H1 (cell line): ENCODE measurements at regions of chr11 and their contacts with region 1.

Region 1: GRCh38 chr11:113796663-113797259 is 17.2 kb downstream of the CLDN25 start:
- DNase-seq: no peak
- H3K4me3 ChIP-seq: no peak overlapping the region
- H3K27ac ChIP-seq: no peak overlapping the region
- H3K4me1 ChIP-seq: no peaks in the 10 kb centered on the region
- H3K27me3 ChIP-seq: no peaks in the 10 kb centered on the region
- CTCF ChIP-seq: peak in 2 of 3 experiments; percentile 53 to 66; a peak in 3 of 4 replicates
- EP300 ChIP-seq: no peak
- POLR2A ChIP-seq: no peak
- RAD21 ChIP-seq: peak; percentile 23 to 49

Region 2: DNA sequence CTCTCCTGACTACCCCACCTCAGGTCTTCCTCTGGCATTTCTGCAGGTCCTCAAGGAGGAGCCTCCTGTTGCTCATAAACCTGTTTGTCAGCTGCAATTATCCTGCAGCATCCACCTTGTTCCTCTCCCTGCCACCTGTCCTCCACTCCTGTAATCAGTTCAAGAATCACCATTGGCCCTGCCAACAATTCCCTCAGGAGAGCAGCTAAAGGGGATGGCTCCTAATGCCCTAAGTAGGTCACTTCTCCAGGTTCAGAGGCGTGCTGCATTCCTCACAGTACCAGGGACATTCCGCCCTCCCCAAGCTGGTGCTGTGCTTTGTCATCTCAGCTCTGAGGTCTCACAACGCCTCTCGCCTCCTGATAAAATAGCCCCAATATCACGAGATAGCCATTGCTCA is 15.1 kb before region 1 on chr11:
- CTCF ChIA-PET with region 1: interaction called, 14 read pairs
- POLR2A ChIA-PET with region 1: no interaction called
- DNase-seq: no peak
- H3K4me3 ChIP-seq: no peak overlapping the region
- H3K27ac ChIP-seq: no peak overlapping the region
- H3K4me1 ChIP-seq: no peaks in the 10 kb centered on the region
- H3K27me3 ChIP-seq: no peaks in the 10 kb centered on the region
- CTCF ChIP-seq: no peak
- EP300 ChIP-seq: no peak
- POLR2A ChIP-seq: no peak
- RAD21 ChIP-seq: no peak